Heart left ventricle (tissue), 16 donors: ENCODE measurements at regions of chr1 and their contacts with region 1.

Region 1: DNA sequence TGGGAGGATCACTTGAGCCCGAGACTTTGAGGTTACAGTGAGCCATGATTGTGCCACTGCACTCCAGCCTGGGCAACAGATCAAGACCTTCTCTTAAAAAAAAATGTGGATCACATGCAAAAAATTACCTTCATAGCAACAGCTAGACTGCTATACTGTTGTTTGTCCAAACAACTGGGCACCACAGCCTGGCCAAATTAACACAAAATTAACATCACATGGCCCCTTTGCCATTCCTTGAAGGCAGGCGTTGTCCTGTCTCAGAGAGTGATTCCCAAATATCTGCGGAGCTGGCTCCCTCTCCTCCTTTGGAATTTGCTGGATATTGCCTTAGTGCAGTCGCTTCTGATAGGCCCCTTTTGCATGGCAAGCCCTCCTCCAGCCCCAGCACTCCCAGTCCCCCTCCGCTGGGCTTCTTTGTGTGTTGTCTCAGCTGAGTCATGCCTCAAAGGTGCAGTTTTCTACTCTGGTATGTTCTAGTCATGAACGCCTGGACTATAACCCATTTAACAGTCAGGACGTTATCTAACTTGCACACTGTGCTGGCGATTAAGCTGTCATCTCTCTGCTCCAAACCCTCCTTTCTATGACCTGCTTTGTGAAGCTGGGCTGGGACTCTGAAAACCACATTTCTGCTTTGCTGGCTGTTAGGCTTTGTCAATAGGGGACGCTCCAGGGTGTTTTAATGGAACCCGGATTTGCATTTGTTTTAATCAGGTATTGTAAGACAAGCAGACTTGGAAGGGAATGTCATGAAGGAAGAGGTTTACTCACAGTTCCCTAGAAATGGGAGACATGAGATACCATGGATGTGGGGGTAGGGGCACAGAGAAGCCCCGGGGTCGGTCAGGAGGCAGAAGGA is 20.1 kb upstream of the HPCAL4 start:
- DNase-seq: no peak
- ATAC-seq: no peak
- H3K4me3 ChIP-seq: no peak overlapping the region
- H3K27ac ChIP-seq: no peak overlapping the region
- H3K4me1 ChIP-seq: no peaks in the 10 kb centered on the region
- H3K27me3 ChIP-seq: peaks cover 0 to 13% (median 0%) of the 10 kb centered on the region in 9 donors
- CTCF ChIP-seq: no peak
- POLR2A ChIP-seq: no peak

Region 2: DNA sequence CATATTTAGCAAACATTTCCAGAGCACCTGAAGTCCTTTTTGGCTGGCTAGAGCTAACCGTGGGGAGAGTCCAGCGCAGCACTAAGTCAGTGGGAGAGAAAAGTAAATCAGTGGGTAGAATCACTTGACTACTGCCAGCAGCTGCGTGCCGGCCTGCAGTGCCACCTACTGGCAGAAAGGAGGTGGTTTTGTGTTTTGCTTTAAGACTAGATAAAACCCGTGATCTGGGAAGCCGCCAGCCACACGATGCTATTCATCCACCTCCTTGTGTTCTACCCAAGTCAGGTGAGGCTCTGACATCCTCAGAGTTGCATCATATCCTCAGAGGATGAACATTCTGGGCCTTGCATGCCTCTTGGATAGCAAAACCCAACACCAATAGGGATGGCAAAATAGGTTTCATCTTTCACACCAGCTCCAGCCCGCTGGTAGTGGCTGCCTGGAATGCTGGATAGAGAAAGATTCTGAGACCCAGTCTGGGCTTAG is 57.7 kb before region 1 on chr1:
- intact Hi-C with region 1: loop called in 3 of 10 experiments (anchors 5 to 10 kb)
- DNase-seq: peak; percentile 69 to 86 (median 80)
- ATAC-seq: peak in 3 of 4 donors; percentile 57 to 70 (median 63)
- H3K4me3 ChIP-seq: no peak overlapping the region
- H3K27ac ChIP-seq: peak overlapping the region in 6 of 12 donors; percentile 61 to 77 (median 74)
- H3K4me1 ChIP-seq: peaks cover 0 to 51% (median 14%) of the 10 kb centered on the region in 12 donors
- H3K27me3 ChIP-seq: no peaks in the 10 kb centered on the region
- CTCF ChIP-seq: peak; percentile 84 to 96 (median 92)
- POLR2A ChIP-seq: no peak

Region 3: DNA sequence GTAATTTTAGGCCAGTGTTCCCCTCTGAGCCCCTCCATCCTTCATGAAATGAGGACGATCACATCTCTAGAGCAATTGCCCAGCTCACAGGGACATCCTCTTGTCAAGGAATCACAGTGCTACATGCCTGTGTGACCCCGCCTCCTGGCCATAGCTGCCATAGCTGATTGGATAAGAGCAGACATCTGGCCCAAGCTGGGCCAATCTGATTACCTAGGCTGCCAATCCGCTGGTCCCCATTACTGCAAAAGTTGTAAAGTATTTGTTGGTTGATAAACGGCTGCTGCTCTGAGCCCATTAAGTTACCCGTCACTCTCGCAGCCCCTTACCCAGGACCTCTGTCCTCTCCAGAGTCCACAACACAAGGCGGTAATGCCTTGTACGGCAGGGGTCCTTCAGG is 47.8 kb before region 1 on chr1:
- intact Hi-C with region 1: loop called in 4 of 10 experiments (anchors 5 to 10 kb)
- DNase-seq: no peak
- ATAC-seq: no peak
- H3K4me3 ChIP-seq: no peak overlapping the region
- H3K27ac ChIP-seq: no peak overlapping the region
- H3K4me1 ChIP-seq: peaks cover 0 to 15% (median 4%) of the 10 kb centered on the region in 12 donors
- H3K27me3 ChIP-seq: no peaks in the 10 kb centered on the region
- CTCF ChIP-seq: no peak
- POLR2A ChIP-seq: no peak

Region 4: DNA sequence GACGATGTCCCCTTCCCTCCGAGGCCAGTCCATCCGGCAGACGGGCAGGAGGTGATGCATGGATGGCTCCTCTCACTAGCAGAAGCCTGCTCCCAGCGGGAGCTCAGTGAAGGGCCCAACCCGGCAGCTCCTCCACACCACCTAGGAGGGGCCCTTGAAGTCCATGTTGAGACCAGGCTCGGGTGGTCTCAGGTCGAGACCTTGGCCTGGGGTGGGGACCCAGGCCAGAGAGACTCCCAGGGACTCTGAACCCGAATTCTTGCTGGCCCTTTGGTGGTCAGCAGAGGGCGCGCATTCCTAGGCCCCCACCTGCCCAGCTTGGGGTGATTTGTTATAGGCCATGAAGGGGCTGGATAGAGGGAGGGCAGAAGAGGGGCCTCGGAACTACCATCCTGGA is 38.8 kb before region 1 on chr1:
- intact Hi-C with region 1: loop called in 4 of 10 experiments (anchors 2 to 5 kb)
- DNase-seq: no peak
- ATAC-seq: peak; percentile 13 to 40 (median 24)
- H3K4me3 ChIP-seq: peak overlapping the region in 11 of 12 donors; percentile 24 to 86 (median 66)
- H3K27ac ChIP-seq: peak overlapping the region in 8 of 12 donors; percentile 75 to 91 (median 86)
- H3K4me1 ChIP-seq: peaks cover 0 to 48% (median 19%) of the 10 kb centered on the region in 12 donors
- H3K27me3 ChIP-seq: peaks cover 0 to 26% (median 4%) of the 10 kb centered on the region in 9 donors
- CTCF ChIP-seq: peak in 11 of 12 donors; percentile 21 to 60 (median 48)
- POLR2A ChIP-seq: no peak